ENCODE measurements at regions of chr22 and their contacts with region 1.

Region 1: GRCh38 chr22:32796865-32797573 is 4.5 kb upstream of the TIMP3 start:
- DNase-seq: peak; percentile 54 to 65 (median 64)
- ATAC-seq: peak; percentile 97
- H3K4me3 ChIP-seq: no peak overlapping the region
- H3K27ac ChIP-seq: no peak overlapping the region
- H3K4me1 ChIP-seq: peaks cover 0 to 12% of the 10 kb centered on the region in 2 experiments; a peak in 2 of 5 replicates
- H3K27me3 ChIP-seq: peaks cover 4 to 13% of the 10 kb centered on the region in 2 experiments; a peak in 3 of 5 replicates
- CTCF ChIP-seq: peak; percentile 75 to 85 (median 79)
- EP300 ChIP-seq: no peak
- POLR2A ChIP-seq: no peak
- RAD21 ChIP-seq: peak; percentile 79 to 84

Region 2: DNA sequence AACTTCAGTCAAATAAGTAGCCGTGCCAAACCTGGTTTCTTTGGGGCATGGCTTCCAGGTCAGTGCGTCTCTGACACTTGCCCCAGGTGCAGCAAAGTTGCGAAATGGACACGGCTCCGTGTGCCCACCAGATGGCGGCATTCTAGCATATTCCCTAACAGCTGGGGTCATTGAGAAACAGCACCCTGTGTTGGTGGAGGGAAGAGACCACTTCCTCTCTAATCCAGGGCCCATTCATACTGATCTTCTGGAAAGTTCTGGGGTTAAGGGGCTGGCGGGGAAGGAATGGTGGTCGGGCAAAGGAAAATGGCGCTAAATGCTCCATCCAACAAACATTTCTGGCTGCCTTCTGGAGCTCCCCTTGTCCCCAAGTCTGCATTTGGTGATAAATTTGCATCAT is 136.7 kb before region 1 on chr22:
- CTCF ChIA-PET with region 1: interaction called, 8 read pairs
- POLR2A ChIA-PET with region 1: no interaction called
- in situ Hi-C with region 1: loop called (anchors 5 kb)
- intact Hi-C with region 1: loop called (anchors 2 kb)
- DNase-seq: peak; percentile 63 to 69 (median 68)
- ATAC-seq: peak; percentile 88
- H3K4me3 ChIP-seq: no peak overlapping the region
- H3K27ac ChIP-seq: no peak overlapping the region
- H3K4me1 ChIP-seq: no peaks in the 10 kb centered on the region; a peak in 1 of 5 replicates
- H3K27me3 ChIP-seq: peaks cover 0 to 9% of the 10 kb centered on the region in 2 experiments; a peak in 4 of 5 replicates
- CTCF ChIP-seq: peak; percentile 76 to 80 (median 76)
- EP300 ChIP-seq: no peak
- POLR2A ChIP-seq: no peak
- RAD21 ChIP-seq: peak; percentile 82 to 86

Region 3: DNA sequence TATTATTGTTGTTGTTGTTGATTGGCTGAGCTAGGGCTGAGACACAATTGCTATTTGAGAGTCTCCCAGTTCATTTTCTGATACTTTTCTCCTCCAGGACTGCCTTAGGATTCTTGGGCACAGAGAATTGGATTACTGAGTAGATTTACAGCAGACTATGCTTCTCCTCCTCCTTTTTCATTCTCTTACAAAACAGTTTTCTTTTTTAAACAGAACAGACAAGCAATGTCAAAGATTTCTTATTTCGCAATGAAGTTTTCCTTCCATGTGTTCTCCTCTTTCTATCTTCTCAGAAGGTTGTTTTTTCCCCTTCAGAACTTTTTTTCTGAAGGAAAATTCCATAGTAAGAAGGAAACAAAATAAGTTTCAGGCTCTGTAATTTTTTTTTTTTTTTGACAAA is 15.3 kb before region 1 on chr22:
- CTCF ChIA-PET with region 1: no interaction called
- POLR2A ChIA-PET with region 1: no interaction called
- in situ Hi-C with region 1: no loop called
- intact Hi-C with region 1: no loop called
- DNase-seq: no peak
- ATAC-seq: no peak
- H3K4me3 ChIP-seq: no peak overlapping the region
- H3K27ac ChIP-seq: no peak overlapping the region
- H3K4me1 ChIP-seq: no peaks in the 10 kb centered on the region
- H3K27me3 ChIP-seq: peaks cover 2 to 4% of the 10 kb centered on the region in 2 experiments; a peak in 2 of 5 replicates
- CTCF ChIP-seq: no peak
- EP300 ChIP-seq: no peak
- POLR2A ChIP-seq: no peak
- RAD21 ChIP-seq: no peak